ENCODE measurements at regions of chr18 and their contacts with region 1.

Region 1: GRCh38 chr18:72985686-72986085 is 117.9 kb upstream of the NETO1 start:
- DNase-seq: no peak
- ATAC-seq: no peak
- H3K4me3 ChIP-seq: no peak overlapping the region
- H3K27ac ChIP-seq: no peak overlapping the region
- H3K4me1 ChIP-seq: no peaks in the 10 kb centered on the region
- H3K27me3 ChIP-seq: no peaks in the 10 kb centered on the region
- CTCF ChIP-seq: no peak
- EP300 ChIP-seq: no peak
- POLR2A ChIP-seq: no peak
- RAD21 ChIP-seq: no peak

Region 2: GRCh38 chr18:71398531-71398930 is 1587.2 kb before region 1 on chr18:
- CTCF ChIA-PET with region 1: no interaction called
- POLR2A ChIA-PET with region 1: no interaction called
- in situ Hi-C with region 1: no loop called
- intact Hi-C with region 1: loop called (anchors 5 kb)
- DNase-seq: peak; percentile 1
- ATAC-seq: no peak
- H3K4me3 ChIP-seq: no peak overlapping the region
- H3K27ac ChIP-seq: no peak overlapping the region
- H3K4me1 ChIP-seq: no peaks in the 10 kb centered on the region
- H3K27me3 ChIP-seq: no peaks in the 10 kb centered on the region
- CTCF ChIP-seq: peak; percentile 40
- EP300 ChIP-seq: no peak
- POLR2A ChIP-seq: no peak
- RAD21 ChIP-seq: no peak